Naive thymus-derived CD4-positive, alpha-beta T cell (primary cell): ENCODE measurements at regions of chr1 and their contacts with region 1.

Region 1: DNA sequence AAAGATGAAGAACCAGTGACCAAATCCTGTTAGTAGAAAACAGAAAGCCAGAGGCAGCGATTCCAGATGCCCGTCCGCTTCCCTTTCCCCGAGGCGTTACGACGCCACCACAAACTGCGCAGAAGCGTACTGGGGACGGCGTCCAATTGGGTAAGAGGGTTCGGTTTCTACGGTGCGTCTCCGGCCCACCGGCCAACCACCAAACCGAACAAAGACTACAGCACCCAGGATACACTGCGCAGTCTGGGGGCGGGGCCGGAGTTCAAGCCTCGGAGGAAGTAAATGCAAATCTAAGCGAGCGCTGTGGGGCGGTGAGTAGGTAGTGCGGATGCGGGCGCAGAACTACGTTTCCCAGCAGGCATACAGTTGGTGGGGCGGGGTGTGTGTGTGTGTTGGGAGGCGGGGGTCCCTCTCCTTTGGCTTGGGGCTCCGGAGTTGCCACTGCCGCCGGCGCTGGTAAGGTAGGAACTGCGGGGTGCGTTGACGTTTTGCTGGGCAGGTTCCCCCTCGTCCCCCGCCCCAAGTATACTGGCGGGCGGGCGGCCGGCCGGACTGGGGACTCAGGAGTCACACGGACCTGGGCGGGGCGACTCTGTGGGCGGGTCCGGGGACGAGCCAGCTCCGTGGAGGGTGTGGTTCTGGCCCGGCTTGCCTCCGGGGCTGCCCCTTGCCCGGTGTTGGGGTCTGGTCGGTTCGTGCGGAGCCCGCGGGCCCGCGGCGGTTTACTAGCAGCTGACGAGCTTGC is at the starts of genes SWT1 and TRMT1L:
- DNase-seq: peak; percentile 91 to 97 (median 96)
- ATAC-seq: peak; percentile 95
- H3K4me3 ChIP-seq: peak within 1 kb of the TSS; percentile 88
- H3K4me3 Mint-ChIP-seq: peak within 1 kb of the TSS; percentile 97 to 100 (median 98)
- H3K27ac ChIP-seq: peak within 1 kb of the TSS; percentile 97
- H3K27ac Mint-ChIP-seq: peak within 1 kb of the TSS; percentile 96 to 100 (median 98)
- H3K4me1 ChIP-seq: peaks cover 9 to 20% of the 10 kb centered on the region in 2 donors
- H3K4me1 Mint-ChIP-seq: peaks cover 28 to 67% (median 56%) of the 10 kb centered on the region in 7 donors
- H3K27me3 ChIP-seq: no peaks in the 10 kb centered on the region
- H3K27me3 Mint-ChIP-seq: no peaks in the 10 kb centered on the region
- total RNA-seq, gene SWT1: 4.4 to 11.5 (median 5.2) TPM
- total RNA-seq, gene TRMT1L: 11.6 to 33.9 (median 27.3) TPM

Region 2: GRCh38 chr1:184051485-184052193 is 1105.4 kb before region 1 on chr1 and contains the start of gene TSEN15:
- CTCF ChIA-PET with region 1: no interaction called
- POLR2A ChIA-PET with region 1: no interaction called
- intact Hi-C with region 1: loop called (anchors 2 to 5 kb)
- DNase-seq: peak; percentile 54 to 75 (median 68)
- ATAC-seq: peak; percentile 98
- H3K4me3 ChIP-seq: peak within 1 kb of the TSS; percentile 87
- H3K4me3 Mint-ChIP-seq: peak within 1 kb of the TSS; percentile 91 to 99 (median 98)
- H3K27ac ChIP-seq: peak within 1 kb of the TSS; percentile 77
- H3K27ac Mint-ChIP-seq: peak within 1 kb of the TSS; percentile 89 to 99 (median 95)
- H3K4me1 ChIP-seq: peaks cover 19 to 23% of the 10 kb centered on the region in 2 donors
- H3K4me1 Mint-ChIP-seq: peaks cover 18 to 56% (median 45%) of the 10 kb centered on the region in 7 donors
- H3K27me3 ChIP-seq: peaks cover 0 to 3% of the 10 kb centered on the region in 2 donors
- H3K27me3 Mint-ChIP-seq: peaks cover 13 to 33% (median 20%) of the 10 kb centered on the region in 5 donors
- total RNA-seq, gene TSEN15: 12.7 to 48.9 (median 31.1) TPM

Region 3: DNA sequence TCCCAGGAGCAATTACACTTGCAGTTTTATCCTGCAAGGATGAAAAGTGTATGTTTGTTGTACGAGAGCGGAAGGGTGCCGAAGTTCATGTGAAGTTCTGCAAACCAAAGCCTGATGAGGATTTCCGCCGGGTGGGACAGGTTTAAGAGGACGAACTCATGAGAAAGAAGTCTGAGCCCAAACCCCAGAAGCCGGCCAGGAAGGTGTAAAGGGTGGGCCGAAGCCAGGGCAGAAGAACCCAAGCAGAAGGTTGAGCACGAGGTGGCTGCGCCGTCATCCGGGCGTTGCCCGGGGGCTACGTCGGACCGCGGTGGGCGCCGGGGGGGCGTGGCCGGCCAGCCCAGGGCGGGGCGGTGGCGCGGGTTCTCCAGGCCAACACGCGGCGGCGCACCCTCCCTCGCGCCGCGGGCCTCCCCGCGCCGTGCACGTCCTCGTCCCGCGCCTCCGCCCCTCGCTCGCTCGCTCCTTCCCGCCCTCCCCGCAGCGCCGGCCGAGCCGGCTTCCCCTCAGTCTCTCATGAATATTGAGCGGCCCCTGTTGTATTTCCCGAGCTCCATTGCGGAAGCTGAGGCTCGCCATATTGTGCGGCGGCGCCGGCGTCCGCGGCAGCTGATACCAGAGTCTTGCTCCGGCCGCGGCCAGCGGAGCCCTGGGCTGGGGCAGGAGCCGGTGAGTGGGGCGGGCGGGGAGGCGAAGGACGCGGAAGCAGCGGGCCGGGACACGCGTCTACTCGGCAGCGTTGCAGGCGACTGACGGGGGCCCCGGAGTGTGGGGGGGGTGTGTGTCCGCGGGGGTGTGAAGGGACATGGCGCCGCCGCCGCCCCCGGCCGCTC is 111.8 kb before region 1 on chr1 and contains the start of gene RNF2:
- CTCF ChIA-PET with region 1: no interaction called
- POLR2A ChIA-PET with region 1: interaction called, 8 read pairs
- intact Hi-C with region 1: loop called (anchors 1 kb)
- DNase-seq: peak; percentile 64 to 80 (median 77)
- ATAC-seq: peak; percentile 95
- H3K4me3 ChIP-seq: peak within 1 kb of the TSS; percentile 74
- H3K4me3 Mint-ChIP-seq: peak within 1 kb of the TSS; percentile 87 to 96 (median 92)
- H3K27ac ChIP-seq: peak within 1 kb of the TSS; percentile 75
- H3K27ac Mint-ChIP-seq: peak within 1 kb of the TSS; percentile 69 to 96 (median 88)
- H3K4me1 ChIP-seq: peaks cover 11 to 15% of the 10 kb centered on the region in 2 donors
- H3K4me1 Mint-ChIP-seq: peaks cover 27 to 56% (median 45%) of the 10 kb centered on the region in 7 donors
- H3K27me3 ChIP-seq: no peaks in the 10 kb centered on the region
- H3K27me3 Mint-ChIP-seq: peaks cover 0 to 26% (median 0%) of the 10 kb centered on the region in 5 donors
- total RNA-seq, gene RNF2: 14.9 to 27.7 (median 19.6) TPM

Region 4: DNA sequence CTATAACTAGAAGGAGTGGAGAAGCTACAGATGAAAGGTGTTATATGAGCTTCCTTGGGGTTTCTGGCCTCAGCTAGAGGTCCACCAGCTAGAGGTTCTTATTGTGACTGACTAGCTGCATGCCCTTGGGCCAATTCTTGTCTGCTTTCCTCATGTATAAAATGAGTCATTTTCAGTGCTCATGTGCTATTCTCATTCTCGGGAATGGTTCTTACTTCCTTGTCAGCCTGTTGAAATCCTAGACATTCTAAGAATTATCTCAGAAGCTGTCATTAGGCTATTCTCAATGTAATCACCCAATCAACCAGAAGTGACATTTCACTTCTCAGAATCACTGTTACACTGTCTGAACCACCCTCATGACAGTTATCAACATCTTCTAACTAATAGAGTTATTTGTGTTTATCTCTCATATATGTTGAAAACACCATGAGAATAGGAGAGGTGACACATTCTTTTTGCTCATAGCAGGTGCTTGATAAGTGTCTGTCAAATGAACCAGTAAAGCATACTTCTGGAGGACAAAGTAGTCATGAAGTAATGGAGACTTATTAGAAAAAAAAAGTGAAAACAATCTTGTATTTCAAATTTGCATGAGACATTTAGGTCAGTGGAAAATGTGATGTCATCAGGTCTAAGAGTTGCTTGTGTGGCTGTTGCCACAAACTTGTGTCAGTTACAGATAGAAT is 282.8 kb after region 1 on chr1:
- CTCF ChIA-PET with region 1: no interaction called
- POLR2A ChIA-PET with region 1: no interaction called
- intact Hi-C with region 1: loop called in 1 of 2 experiments (anchors 5 kb)
- DNase-seq: peak in 1 of 9 donors; percentile 34
- ATAC-seq: peak; percentile 80
- H3K4me3 ChIP-seq: no peak overlapping the region
- H3K4me3 Mint-ChIP-seq: no peak overlapping the region
- H3K27ac ChIP-seq: no peak overlapping the region
- H3K27ac Mint-ChIP-seq: no peak overlapping the region
- H3K4me1 ChIP-seq: peaks cover 0 to 20% of the 10 kb centered on the region in 2 donors
- H3K4me1 Mint-ChIP-seq: peaks cover 0 to 36% (median 3%) of the 10 kb centered on the region in 7 donors
- H3K27me3 ChIP-seq: no peaks in the 10 kb centered on the region
- H3K27me3 Mint-ChIP-seq: no peaks in the 10 kb centered on the region

Region 5: GRCh38 chr1:185681034-185681633 is 524.1 kb after region 1 on chr1:
- CTCF ChIA-PET with region 1: interaction called, 5 read pairs
- POLR2A ChIA-PET with region 1: no interaction called
- intact Hi-C with region 1: loop called in 1 of 2 experiments (anchors 5 kb)
- DNase-seq: peak in 6 of 9 donors; percentile 19 to 53 (median 40)
- ATAC-seq: peak; percentile 65
- H3K4me3 ChIP-seq: no peak overlapping the region
- H3K4me3 Mint-ChIP-seq: peak overlapping the region in 2 of 10 donors; percentile 12 to 39
- H3K27ac ChIP-seq: no peak overlapping the region
- H3K27ac Mint-ChIP-seq: peak overlapping the region in 1 of 9 donors; percentile 14
- H3K4me1 ChIP-seq: peaks cover 4 to 13% of the 10 kb centered on the region in 2 donors
- H3K4me1 Mint-ChIP-seq: peaks cover 13 to 41% (median 28%) of the 10 kb centered on the region in 7 donors
- H3K27me3 ChIP-seq: no peaks in the 10 kb centered on the region
- H3K27me3 Mint-ChIP-seq: peaks cover 0 to 16% (median 0%) of the 10 kb centered on the region in 5 donors

Region 6: GRCh38 chr1:186375088-186375953 is 1218.3 kb after region 1 on chr1 and contains the starts of genes ODR4 and TPR:
- CTCF ChIA-PET with region 1: interaction called, 3 read pairs
- POLR2A ChIA-PET with region 1: interaction called, 5 read pairs
- intact Hi-C with region 1: loop called (anchors 1 kb)
- DNase-seq: peak; percentile 92 to 98 (median 97)
- ATAC-seq: peak; percentile 88
- H3K4me3 ChIP-seq: peak within 1 kb of the TSS; percentile 98
- H3K4me3 Mint-ChIP-seq: peak within 1 kb of the TSS; percentile 90 to 99 (median 98)
- H3K27ac ChIP-seq: peak within 1 kb of the TSS; percentile 93
- H3K27ac Mint-ChIP-seq: peak within 1 kb of the TSS; percentile 91 to 99 (median 97)
- H3K4me1 ChIP-seq: peaks cover 24 to 25% of the 10 kb centered on the region in 2 donors
- H3K4me1 Mint-ChIP-seq: peaks cover 28 to 70% (median 54%) of the 10 kb centered on the region in 7 donors
- H3K27me3 ChIP-seq: no peaks in the 10 kb centered on the region
- H3K27me3 Mint-ChIP-seq: no peaks in the 10 kb centered on the region
- total RNA-seq, gene ODR4: 13.6 to 19.6 (median 18.3) TPM
- total RNA-seq, gene TPR: 118 to 195 (median 158) TPM